Thyroid gland (tissue), 4 donors: ENCODE measurements at regions of chr22 and their contacts with region 1.

Region 1: DNA sequence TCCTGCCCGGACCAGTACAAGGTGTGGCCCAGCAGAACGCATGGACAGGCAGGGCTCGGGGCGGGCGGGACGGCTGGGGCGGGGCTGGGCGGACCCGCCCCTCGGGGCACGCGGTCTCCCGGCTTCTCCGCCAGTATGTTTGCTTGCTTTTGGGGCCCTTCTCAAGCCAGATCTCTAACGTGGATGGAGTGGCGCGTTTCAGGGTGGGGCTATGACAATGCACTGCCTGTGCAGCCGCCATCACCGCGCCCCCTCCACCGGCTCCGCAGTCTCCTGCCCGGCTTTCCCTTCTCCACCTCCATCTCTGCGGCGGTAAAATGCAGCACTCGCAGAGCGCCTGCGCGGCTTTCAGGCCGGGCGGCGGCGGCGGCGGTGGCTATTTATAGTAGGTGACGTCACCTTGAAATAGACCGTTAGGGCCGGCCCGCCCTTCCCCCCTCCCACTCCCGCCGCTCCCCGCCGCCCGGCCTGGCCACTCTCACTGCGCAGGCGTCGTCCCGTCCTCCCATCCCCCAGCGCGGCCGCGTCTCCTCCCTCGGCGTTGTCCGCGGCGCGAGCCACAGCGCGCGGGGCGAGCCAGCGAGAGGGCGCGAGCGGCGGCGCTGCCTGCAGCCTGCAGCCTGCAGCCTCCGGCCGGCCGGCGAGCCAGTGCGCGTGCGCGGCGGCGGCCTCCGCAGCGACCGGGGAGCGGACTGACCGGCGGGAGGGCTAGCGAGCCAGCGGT is at the start of gene YWHAH:
- DNase-seq: peak; percentile 95 to 96
- H3K4me3 ChIP-seq: peak within 1 kb of the TSS; percentile 61 to 85 (median 73)
- H3K27ac ChIP-seq: peak within 1 kb of the TSS; percentile 88 to 96 (median 92)
- H3K4me1 ChIP-seq: peaks cover 9 to 22% of the 10 kb centered on the region in 2 donors
- H3K27me3 ChIP-seq: no peaks in the 10 kb centered on the region
- CTCF ChIP-seq: peak in 2 of 6 experiments; percentile 7 to 23
- POLR2A ChIP-seq: peak; percentile 96 to 97
- total RNA-seq, gene YWHAH: 93.0 to 111 (median 103) TPM

Region 2: DNA sequence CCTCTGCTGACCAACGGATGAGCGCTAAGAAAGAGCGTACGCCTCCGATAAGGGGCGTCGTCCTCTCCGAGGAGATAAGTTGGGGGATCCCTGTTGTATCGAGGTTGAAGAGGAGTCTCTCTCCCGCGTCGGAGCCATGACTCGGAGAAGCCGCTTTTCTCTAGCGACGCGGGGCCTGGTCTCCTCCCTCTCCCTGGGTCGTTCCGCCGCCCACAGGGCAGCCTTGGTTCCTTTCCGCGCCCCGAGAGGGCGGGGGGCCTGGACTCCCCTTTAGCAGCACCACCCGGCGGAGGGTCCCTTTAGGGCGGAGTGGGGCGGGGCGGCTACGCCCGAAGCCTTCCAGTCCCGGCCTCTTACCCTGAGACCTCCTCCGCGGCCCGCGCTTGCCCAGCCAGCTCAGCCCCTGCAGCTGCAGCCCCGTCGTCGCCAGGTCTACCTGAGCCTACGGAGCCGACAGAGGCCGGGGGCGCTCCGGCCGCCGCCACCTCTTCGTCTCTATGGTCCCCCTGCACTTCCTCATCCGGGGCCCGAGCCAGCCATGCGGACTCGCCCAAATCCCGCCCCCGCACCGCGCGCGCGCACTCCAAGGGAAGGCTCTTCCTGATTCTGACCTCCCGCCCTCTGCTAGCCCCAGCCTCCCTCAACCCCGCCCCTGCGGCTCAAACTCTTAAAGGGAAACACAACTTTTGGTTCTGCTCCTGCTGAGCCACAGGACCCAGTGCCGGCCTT is 194.3 kb before region 1 on chr22 and contains the start of gene PRR14L:
- intact Hi-C with region 1: loop called (anchors 5 kb)
- DNase-seq: peak; percentile 99
- H3K4me3 ChIP-seq: peak within 1 kb of the TSS; percentile 52 to 84 (median 81)
- H3K27ac ChIP-seq: peak within 1 kb of the TSS; percentile 55 to 84 (median 62)
- H3K4me1 ChIP-seq: peaks cover 36 to 39% of the 10 kb centered on the region in 2 donors
- H3K27me3 ChIP-seq: no peaks in the 10 kb centered on the region
- CTCF ChIP-seq: peak in 2 of 6 experiments; percentile 7 to 11
- POLR2A ChIP-seq: peak in 1 of 2 donors; percentile 87
- total RNA-seq, gene PRR14L: 18.7 to 38.8 (median 29.4) TPM

Region 3: GRCh38 chr22:32245042-32245441 is 300.9 kb after region 1 on chr22:
- intact Hi-C with region 1: no loop called
- DNase-seq: no peak
- H3K4me3 ChIP-seq: no peak overlapping the region
- H3K27ac ChIP-seq: no peak overlapping the region
- H3K4me1 ChIP-seq: no peaks in the 10 kb centered on the region
- H3K27me3 ChIP-seq: no peaks in the 10 kb centered on the region
- CTCF ChIP-seq: no peak
- POLR2A ChIP-seq: no peak